Dendritic cell treated with granulocyte-macrophage colony-stimulating factor and Interleukin-4, amounts not matched to agents 40 ng/mL and 50 ng/mL, for 4 days (primary cell): ENCODE measurements at regions of chr6 and their contacts with region 1.

Region 1: DNA sequence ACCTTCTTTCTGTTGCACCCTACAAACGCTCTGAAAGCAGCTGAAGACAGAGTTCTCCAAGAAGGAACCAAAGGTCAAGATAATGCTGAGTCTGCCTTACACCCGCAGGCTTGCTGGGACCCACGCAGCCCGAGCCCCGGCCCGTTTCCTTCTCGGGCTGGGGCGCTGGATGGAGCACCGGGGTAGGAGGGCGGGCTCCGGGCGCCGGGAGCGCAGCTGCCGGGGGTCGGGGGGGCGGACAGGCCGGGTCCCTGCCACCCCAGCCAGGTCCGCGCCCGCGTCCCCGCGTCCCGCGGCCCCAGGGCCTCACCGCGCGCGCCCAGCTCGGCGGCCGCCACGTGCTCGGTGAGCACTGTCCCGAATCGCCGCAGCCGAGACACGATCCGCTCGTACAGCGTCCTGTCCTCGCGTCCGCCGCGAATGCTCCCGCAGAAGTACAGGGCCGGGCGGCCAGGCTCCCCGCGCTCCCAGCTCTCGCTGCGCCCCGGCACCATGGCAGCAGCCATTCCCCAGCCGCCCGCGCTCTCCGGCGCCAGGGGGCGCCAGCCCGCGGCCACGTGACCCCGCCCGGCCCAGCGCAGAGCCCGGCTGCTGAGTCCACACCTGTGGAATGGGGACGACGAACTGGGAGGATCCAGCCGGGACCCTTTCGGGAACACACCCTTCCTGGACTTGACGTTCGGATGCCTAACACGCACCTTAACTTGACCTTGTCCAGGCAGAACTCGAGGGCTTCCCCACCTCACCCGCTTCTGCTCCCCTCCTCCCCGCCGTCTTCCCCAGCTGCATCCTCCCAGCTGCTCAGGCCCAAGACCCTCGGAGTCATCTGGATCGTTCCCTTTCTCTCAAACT is at the start of gene DNPH1:
- H3K4me3 Mint-ChIP-seq: peak within 1 kb of the TSS; percentile 75
- H3K27ac Mint-ChIP-seq: peak within 1 kb of the TSS; percentile 85
- H3K4me1 Mint-ChIP-seq: peaks cover 51% of the 10 kb centered on the region
- H3K27me3 Mint-ChIP-seq: peaks cover 22% of the 10 kb centered on the region

Region 2: DNA sequence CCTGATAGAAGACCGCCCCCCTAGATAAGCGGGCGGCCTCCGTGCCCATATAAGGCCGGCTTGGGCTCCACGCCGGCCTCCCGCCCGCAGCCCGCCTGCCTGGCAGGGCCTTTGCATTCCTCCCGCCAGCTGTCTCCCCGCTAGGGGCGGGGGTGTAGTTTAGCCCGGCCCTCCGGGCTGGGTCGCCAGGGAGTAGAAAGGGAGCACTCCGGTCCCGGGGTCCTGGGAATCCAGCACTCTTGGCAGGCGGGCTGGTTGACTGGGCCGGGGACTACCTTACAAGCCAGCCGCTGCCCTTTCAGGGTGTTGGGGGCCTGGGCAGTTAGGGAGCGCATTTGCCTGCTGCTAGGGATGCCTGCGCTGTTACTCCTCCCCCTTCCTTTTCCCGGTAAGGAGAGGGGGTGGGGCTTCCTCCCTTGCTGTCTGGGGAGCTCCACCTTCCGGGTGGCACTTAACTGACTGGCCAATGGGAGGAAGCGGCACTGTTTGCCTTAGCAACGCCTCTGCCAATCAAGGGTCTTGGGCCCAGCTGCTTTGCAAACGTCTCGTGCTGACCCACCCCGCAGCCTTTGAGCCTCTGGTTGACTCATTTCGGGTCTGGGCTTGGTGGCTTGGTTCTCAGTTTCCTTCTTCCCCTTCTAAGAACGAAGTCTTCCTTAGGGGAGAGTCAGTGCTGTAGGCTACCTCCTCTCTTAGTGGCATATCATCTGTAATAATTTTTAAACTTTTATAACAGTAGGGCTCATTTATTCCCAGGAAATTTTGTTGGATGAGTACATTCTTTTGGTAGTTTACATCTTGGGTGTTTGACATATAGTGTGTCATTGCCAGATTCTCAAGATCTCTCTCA is 54.7 kb before region 1 on chr6:
- intact Hi-C with region 1: loop called (anchors 5 kb)
- H3K4me3 Mint-ChIP-seq: peak overlapping the region; percentile 79
- H3K27ac Mint-ChIP-seq: peak overlapping the region; percentile 95
- H3K4me1 Mint-ChIP-seq: peaks cover 56% of the 10 kb centered on the region
- H3K27me3 Mint-ChIP-seq: no peaks in the 10 kb centered on the region

Region 3: DNA sequence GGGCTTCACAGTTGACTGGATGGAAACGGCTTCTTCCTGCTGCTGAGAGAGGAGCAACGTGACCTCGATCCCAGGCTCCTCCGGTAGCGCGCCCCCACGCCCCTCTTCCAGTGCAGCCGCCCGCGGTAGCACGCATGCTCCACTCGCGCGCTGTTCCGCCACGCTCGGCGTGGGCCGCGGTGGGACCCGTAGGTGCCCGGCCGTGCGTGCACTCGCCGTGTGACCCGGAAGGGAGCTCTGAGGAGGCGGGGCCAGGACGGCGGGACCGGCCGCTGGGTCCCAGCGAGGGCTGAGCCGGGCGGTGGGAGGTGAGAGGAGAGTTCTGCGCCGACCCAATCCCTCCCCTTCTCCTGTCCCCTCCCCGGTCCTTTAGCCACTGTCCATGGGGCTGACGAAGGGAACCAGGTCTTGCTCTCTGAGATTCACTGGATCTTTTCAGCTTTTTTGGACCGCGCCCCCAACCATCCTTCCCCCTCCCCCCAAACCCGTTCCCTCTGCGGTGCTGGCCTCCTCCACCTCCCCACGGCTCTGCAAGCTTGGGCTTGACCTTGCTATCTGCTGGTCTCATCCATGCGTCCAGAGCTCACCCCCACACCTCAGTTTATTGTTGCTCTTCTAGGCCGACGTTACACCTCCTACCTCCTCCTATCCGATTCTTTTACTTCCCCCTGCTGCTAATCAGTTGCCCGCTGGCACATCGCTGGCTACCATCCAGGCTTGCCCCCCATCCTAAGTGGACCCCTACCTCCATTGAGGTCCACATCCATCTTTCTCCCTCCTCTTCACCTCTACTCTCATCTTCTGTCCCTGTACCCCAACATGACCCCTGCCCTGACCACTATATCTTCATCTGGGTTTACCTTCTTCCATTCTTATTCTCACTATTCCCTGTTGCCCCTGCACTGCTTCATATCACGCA is 47.0 kb before region 1 on chr6 and contains the start of gene CUL9:
- intact Hi-C with region 1: loop called (anchors 2 kb)
- H3K4me3 Mint-ChIP-seq: peak within 1 kb of the TSS; percentile 99
- H3K27ac Mint-ChIP-seq: peak within 1 kb of the TSS; percentile 58
- H3K4me1 Mint-ChIP-seq: peaks cover 44% of the 10 kb centered on the region
- H3K27me3 Mint-ChIP-seq: no peaks in the 10 kb centered on the region

Region 4: GRCh38 chr6:43211955-43212354 is 17.2 kb before region 1 on chr6:
- intact Hi-C with region 1: no loop called
- H3K4me3 Mint-ChIP-seq: no peak overlapping the region
- H3K27ac Mint-ChIP-seq: no peak overlapping the region
- H3K4me1 Mint-ChIP-seq: no peaks in the 10 kb centered on the region
- H3K27me3 Mint-ChIP-seq: no peaks in the 10 kb centered on the region

Region 5: GRCh38 chr6:43247113-43247999 is 18.2 kb after region 1 on chr6:
- intact Hi-C with region 1: loop called (anchors 2 kb)
- H3K4me3 Mint-ChIP-seq: peak overlapping the region; percentile 75
- H3K27ac Mint-ChIP-seq: peak overlapping the region; percentile 64
- H3K4me1 Mint-ChIP-seq: peaks cover 27% of the 10 kb centered on the region
- H3K27me3 Mint-ChIP-seq: peaks cover 32% of the 10 kb centered on the region